Natural killer cell (primary cell): ENCODE measurements at regions of chr6 and their contacts with region 1.

Region 1: DNA sequence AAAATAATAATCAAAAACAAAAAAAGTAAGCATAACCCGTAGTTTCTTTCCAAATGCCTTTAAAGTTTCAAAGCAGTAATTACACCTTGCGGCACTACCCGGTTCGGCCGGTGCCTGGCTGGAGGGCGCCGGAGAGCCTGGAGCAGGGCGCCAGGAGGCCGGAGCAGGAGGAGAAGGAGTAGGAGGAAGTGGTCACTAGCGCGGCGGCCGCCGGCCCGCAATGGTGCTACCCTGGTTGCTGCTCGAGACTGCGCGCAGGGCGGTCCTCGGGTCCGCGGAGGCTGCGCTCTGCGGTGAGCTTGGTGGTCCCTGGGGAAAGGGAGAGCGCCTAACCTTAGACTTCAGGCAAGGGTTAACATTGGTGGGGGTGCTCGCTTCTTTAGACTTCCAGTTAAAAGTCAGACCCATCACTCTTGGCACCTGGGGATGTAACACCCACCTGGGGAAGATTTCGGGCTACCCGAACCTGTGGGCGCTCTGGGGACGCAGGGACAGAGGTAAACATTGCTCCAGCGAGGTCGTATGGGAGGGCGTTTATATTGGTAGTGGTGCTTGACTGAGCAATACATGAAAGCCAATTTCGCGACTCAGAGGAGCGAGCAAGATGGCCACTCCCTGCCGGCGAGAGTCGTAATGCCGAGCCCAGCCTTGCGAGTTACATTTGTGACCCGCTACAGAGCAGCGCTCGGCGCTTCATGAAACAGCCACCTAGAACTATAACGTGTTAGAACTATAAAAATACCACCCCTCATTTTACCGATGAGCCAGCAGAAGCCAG is 5.8 kb upstream of the USP45 start:
- DNase-seq: peak; percentile 61 to 82
- ATAC-seq: peak; percentile 89 to 94 (median 90)
- H3K4me3 ChIP-seq: peak overlapping the region; percentile 94
- H3K4me3 Mint-ChIP-seq: peak overlapping the region; percentile 99
- H3K27ac ChIP-seq: peak overlapping the region; percentile 73
- H3K27ac Mint-ChIP-seq: peak overlapping the region; percentile 86 to 95
- H3K4me1 ChIP-seq: peaks cover 6% of the 10 kb centered on the region
- H3K4me1 Mint-ChIP-seq: peaks cover 22 to 25% of the 10 kb centered on the region in 2 donors
- H3K27me3 ChIP-seq: no peaks in the 10 kb centered on the region
- H3K27me3 Mint-ChIP-seq: no peaks in the 10 kb centered on the region
- CTCF ChIP-seq: peak; percentile 96

Region 2: DNA sequence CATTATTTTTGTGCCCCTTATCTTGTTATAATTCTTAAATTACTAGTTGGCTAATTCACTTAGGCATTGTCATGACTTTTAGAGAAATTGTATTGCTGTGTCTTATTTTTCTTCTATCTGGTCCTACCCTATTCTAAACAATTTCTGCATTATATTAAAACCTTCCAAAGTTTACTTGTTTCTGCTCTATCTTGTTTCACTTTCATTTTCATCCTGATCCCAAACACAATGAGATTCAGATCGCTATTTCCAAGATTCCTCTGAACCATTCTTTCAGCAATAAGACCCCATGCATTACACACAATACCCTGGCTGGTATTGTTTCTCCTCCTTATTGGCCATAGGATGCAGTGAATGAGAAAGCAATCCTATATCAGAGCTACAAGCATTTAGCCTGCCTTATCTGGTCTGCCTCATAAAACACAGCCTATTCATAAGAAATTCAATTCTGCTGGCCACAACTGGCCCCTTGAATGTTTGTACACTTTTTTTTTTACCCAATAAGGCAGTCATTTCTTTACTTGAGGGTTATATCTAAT is 756.6 kb before region 1 on chr6:
- intact Hi-C with region 1: no loop called
- DNase-seq: no peak
- ATAC-seq: no peak
- H3K4me3 ChIP-seq: no peak overlapping the region
- H3K4me3 Mint-ChIP-seq: peak overlapping the region; percentile 25
- H3K27ac ChIP-seq: no peak overlapping the region
- H3K27ac Mint-ChIP-seq: no peak overlapping the region
- H3K4me1 ChIP-seq: no peaks in the 10 kb centered on the region
- H3K4me1 Mint-ChIP-seq: peaks cover 3 to 7% of the 10 kb centered on the region in 2 donors
- H3K27me3 ChIP-seq: no peaks in the 10 kb centered on the region
- H3K27me3 Mint-ChIP-seq: no peaks in the 10 kb centered on the region
- CTCF ChIP-seq: no peak

Region 3: DNA sequence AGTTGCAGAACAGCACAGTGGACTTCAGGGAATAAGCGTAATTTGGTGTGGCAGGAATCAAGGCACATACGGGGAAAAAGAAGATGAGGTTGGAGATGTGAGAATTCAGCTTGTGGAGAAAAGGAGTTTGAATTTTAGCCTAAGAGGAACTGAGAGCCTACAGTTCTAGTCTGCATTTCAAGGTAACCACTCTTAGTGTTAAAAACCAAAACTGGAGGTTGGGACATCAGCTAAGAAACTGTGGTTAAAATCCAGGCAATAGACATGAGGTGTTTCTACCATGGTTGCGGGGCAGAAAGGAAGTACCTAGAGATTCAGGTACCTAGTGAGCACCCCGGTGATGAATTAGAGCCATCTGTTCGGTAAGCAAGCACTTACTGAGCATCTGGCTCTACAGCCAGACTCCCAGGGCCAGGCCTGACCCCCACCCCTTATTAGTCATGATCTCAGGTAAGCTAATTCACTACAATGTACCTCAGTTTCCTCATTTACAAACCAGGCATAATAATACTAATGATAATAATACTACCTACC is 216.0 kb before region 1 on chr6:
- intact Hi-C with region 1: no loop called
- DNase-seq: no peak
- ATAC-seq: no peak
- H3K4me3 ChIP-seq: no peak overlapping the region
- H3K4me3 Mint-ChIP-seq: no peak overlapping the region
- H3K27ac ChIP-seq: no peak overlapping the region
- H3K27ac Mint-ChIP-seq: no peak overlapping the region
- H3K4me1 ChIP-seq: no peaks in the 10 kb centered on the region
- H3K4me1 Mint-ChIP-seq: no peaks in the 10 kb centered on the region
- H3K27me3 ChIP-seq: no peaks in the 10 kb centered on the region
- H3K27me3 Mint-ChIP-seq: peaks cover 12 to 16% of the 10 kb centered on the region in 2 donors
- CTCF ChIP-seq: no peak

Region 4: DNA sequence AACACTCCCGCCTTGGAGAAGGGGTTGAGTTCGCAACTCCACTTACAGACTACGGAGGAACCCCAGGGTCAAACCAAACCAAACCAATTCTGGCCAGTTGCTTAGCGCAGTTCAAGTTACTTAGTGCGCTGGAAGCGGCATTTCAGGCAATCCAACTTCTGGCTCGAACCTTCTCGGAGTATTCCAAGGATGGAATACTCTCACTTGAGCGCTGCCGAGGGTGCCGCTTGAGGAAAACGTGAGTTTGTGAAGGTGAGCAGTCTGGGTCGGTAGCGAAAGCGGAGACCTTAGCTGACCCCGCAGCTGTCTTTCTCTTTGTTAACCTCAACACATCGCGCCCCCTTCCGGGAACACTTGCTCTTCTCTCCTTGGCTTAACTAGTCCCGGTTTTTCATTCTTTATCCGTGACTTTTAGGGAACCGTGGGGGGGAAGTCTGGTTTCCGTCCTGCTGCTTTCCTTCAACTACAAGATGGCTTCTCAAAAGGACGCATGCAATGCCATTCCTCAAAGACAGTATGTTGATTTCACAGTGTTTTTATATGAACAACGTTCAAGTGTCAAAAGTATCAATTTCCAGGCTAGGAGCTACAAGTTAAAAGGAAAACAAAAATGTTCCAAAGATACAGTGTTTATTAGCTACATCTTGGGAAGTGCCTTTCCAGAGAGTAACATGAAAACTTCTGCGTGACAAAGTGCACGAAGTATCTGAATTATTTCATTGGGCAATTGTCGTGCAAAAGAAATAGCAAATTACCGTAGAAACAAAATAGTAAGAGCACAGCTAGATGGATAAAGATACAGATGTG is 95.2 kb before region 1 on chr6:
- intact Hi-C with region 1: loop called (anchors 1 kb)
- DNase-seq: peak; percentile 56 to 78
- ATAC-seq: peak; percentile 40 to 58 (median 46)
- H3K4me3 ChIP-seq: peak overlapping the region; percentile 89
- H3K4me3 Mint-ChIP-seq: peak overlapping the region; percentile 100
- H3K27ac ChIP-seq: peak overlapping the region; percentile 99
- H3K27ac Mint-ChIP-seq: peak overlapping the region; percentile 96 to 99
- H3K4me1 ChIP-seq: peaks cover 17% of the 10 kb centered on the region
- H3K4me1 Mint-ChIP-seq: peaks cover 54 to 58% of the 10 kb centered on the region in 2 donors
- H3K27me3 ChIP-seq: no peaks in the 10 kb centered on the region
- H3K27me3 Mint-ChIP-seq: no peaks in the 10 kb centered on the region
- CTCF ChIP-seq: peak; percentile 22

Region 5: GRCh38 chr6:99568103-99568933 is 47.3 kb after region 1 on chr6 and contains the start of gene CCNC:
- intact Hi-C with region 1: loop called (anchors 2 kb)
- DNase-seq: peak; percentile 84 to 91
- ATAC-seq: peak; percentile 96 to 99 (median 98)
- H3K4me3 ChIP-seq: peak within 1 kb of the TSS; percentile 72
- H3K4me3 Mint-ChIP-seq: peak within 1 kb of the TSS; percentile 100
- H3K27ac ChIP-seq: peak within 1 kb of the TSS; percentile 64
- H3K27ac Mint-ChIP-seq: peak within 1 kb of the TSS; percentile 97
- H3K4me1 ChIP-seq: no peaks in the 10 kb centered on the region
- H3K4me1 Mint-ChIP-seq: peaks cover 37 to 41% of the 10 kb centered on the region in 2 donors
- H3K27me3 ChIP-seq: no peaks in the 10 kb centered on the region
- H3K27me3 Mint-ChIP-seq: no peaks in the 10 kb centered on the region
- CTCF ChIP-seq: no peak
- total RNA-seq, gene CCNC: 46.9 to 58.3 (median 52.5) TPM